PC-3 (cell line): ENCODE measurements at regions of chr6 and their contacts with region 1.

Region 1: DNA sequence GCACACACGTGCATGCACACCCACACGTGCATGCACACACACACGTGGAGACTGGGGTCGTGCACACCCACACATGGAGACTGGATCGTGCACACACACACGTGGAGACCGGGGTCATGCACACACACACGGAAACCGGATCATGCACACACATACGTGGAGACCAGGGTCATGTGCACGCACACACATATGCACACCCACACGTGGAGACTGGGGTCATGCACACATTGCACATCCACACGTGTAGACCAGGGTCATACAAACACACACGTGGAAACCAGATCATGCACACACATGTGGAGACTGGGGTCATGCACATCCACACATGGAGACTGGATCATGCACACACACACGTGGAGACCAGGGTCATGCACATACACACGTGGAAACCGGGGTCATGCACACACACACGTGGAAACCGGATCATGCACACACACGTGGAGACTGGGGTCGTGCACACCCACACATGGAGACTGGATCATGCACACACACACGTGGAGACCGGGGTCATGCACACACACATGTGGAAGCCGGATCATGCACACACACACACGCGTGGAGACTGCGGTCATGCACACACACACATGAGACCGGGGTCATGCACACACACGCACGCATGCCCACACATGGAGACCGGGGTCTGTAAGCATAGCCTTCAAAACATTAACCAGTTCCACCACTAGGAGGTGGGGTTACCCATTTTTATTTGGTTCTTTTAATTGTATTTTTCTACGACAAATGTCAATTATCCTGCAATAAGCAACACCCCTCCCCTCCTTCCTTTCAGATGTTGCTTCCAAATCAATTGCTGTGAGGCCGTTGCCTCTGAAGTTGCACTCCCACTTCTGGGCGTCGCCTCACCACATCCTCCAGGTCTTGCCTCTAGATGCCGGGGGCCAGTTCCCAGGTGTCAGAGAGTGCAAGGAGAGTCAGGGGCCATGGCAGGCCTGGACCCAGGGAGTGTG is 95.8 kb downstream of the TMEM242 start:
- DNase-seq: peak; percentile 44
- ATAC-seq: peak; percentile 42; the same call in 1 of the 2 replicates
- H3K4me3 ChIP-seq: no peak overlapping the region
- H3K27ac ChIP-seq: no peak overlapping the region
- H3K4me1 ChIP-seq: peaks cover 4% of the 10 kb centered on the region; the same call in 1 of the 2 replicates
- H3K27me3 ChIP-seq: no peaks in the 10 kb centered on the region
- CTCF ChIP-seq: peak; percentile 52; the same call in 1 of the 2 replicates

Region 2: DNA sequence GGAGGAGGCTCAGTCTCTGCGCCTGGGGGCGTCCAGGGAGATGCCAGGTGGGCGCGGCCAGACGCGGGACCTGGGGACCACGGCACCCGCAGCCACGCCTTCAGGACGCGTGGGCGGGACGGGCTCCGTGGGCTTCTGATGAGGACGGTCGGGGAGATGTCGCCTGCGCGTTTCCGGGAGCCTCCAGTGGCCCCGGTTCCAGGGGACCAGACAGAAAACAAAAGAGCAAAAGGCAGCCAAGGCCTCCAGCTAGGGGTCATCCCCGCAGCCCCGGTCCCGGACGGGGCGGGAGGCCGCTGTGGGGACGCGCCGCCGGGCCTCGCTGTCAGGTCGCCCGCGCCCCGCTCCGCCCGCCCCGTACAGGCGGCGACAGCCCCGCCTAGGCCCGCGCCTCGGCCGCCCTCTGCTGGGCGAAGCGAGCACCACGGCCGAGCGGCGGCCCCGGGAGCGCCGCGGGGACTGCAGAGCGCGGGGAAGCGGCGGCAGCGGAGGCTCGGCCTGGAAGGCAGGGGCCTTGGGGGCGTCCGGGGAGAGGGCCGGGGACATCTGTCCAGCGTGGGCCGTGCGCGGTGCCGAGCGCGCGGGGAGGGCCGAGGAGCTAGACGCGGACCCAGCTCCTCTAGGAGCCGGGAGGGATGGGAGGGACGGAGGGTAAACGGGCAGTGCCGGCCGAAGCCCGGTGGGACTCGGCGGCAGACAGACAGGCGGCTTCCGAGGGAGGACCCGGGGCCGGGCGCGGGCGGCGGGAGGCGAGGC is 47.2 kb after region 1 on chr6:
- CTCF ChIA-PET with region 1: no interaction called
- POLR2A ChIA-PET with region 1: no interaction called
- intact Hi-C with region 1: loop called (anchors 2 kb)
- DNase-seq: peak; percentile 78
- ATAC-seq: peak; percentile 98
- H3K4me3 ChIP-seq: peak overlapping the region; percentile 81
- H3K27ac ChIP-seq: no peak overlapping the region
- H3K4me1 ChIP-seq: peaks cover 3% of the 10 kb centered on the region; the same call in 1 of the 2 replicates
- H3K27me3 ChIP-seq: no peaks in the 10 kb centered on the region
- CTCF ChIP-seq: peak; percentile 50

Region 3: DNA sequence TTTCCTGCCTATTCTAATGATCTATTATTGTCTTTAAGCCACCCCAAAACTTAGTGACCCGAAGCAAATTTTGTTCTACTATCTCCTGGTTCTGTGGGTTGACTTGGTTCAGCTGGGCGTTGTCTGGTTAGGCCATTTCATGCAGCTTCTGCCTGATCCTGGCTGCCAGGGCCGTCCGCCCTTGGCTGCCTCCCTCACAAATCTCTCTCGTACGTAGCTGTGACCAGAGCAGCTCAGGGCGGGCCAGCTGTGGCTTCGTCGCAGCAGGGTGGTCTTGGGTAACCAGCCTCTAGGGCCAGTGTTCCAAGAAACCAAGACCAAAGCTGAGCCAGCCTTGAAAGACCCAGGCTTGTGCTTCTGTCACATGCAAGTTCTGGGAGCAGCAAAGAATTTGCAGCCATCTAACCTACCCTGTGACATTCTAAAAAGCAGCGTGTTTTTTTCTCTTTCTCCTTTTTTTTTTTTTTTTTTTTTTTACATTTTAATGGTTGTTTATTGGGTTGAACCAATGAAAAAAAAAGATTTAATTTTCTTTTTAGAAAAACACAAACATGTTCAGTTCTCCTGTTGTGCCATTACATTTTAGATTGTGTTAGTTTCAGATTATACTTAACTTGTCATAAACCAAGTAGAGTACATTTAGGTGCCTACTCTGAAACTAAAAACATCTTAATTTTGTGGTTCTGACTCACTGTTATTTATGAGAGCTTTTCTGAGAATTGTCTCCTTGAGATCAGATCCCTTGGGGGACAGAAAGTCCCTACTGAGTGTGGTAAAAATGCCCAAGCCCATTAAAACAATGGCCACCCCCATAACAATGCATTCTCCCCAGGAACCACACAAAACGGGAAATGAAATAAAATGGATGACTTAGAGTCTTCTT is 237.4 kb after region 1 on chr6:
- CTCF ChIA-PET with region 1: no interaction called
- POLR2A ChIA-PET with region 1: no interaction called
- intact Hi-C with region 1: no loop called
- DNase-seq: no peak
- ATAC-seq: no peak
- H3K4me3 ChIP-seq: no peak overlapping the region
- H3K27ac ChIP-seq: no peak overlapping the region
- H3K4me1 ChIP-seq: peaks cover 14% of the 10 kb centered on the region
- H3K27me3 ChIP-seq: no peaks in the 10 kb centered on the region
- CTCF ChIP-seq: no peak